ENCODE measurements at regions of chr11 and their contacts with region 1.

Region 1: GRCh38 chr11:74929431-74930363 is 19.2 kb downstream of the XRRA1 start:
- H3K4me3 ChIP-seq: no peak overlapping the region
- H3K27ac ChIP-seq: no peak overlapping the region
- H3K4me1 ChIP-seq: no peaks in the 10 kb centered on the region
- CTCF ChIP-seq: peak; percentile 42; the same call in 1 of the 2 replicates

Region 2: GRCh38 chr11:74909385-74909784 is 20.3 kb before region 1 on chr11:
- CTCF ChIA-PET with region 1: interaction called, 24 read pairs
- POLR2A ChIA-PET with region 1: no interaction called
- H3K4me3 ChIP-seq: no peak overlapping the region
- H3K27ac ChIP-seq: no peak overlapping the region
- H3K4me1 ChIP-seq: no peaks in the 10 kb centered on the region
- CTCF ChIP-seq: no peak

Region 3: GRCh38 chr11:75004215-75004614 is 74.5 kb after region 1 on chr11:
- CTCF ChIA-PET with region 1: interaction called, 10 read pairs
- POLR2A ChIA-PET with region 1: no interaction called
- H3K4me3 ChIP-seq: no peak overlapping the region
- H3K27ac ChIP-seq: no peak overlapping the region
- H3K4me1 ChIP-seq: no peaks in the 10 kb centered on the region
- CTCF ChIP-seq: no peak

Region 4: DNA sequence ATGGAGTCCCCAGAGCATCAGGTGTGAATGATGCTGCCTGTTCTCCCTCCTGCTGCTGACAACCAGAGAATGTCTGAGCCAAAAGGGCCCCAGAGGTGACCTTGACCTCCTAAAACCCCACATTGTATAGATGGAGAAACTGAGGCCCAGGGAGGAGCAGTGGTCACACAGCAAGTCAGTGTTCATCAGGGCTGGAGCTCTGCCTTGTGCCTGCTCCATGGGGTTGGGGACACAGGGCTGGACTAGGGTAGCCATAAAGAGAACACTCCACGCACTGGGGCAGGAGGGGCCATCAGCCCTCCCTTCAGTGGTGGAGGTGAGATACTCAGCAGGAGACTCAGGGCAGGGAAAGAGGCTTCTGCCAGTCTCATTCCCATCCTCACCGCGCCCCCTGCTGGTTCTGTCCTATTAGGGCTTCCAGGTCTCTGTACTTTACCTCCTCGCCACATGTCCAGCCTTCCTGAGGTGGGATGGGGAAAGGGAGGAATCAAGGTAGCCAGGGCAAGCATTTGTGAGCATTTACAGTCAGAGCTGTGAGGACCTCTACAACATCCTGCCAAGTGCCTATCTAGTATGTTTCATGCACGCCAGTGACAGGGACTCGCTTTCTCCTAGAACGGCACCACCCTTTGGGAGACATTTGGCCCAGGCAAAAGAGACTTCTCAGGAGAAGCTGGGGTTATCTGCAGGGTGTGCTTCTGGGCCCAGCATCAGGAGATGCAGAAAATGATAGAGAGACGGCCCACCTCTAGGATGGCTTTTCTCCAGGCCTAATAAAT is 102.3 kb after region 1 on chr11:
- CTCF ChIA-PET with region 1: interaction called, 30 read pairs
- POLR2A ChIA-PET with region 1: no interaction called
- H3K4me3 ChIP-seq: no peak overlapping the region
- H3K27ac ChIP-seq: no peak overlapping the region
- H3K4me1 ChIP-seq: no peaks in the 10 kb centered on the region
- CTCF ChIP-seq: peak; percentile 69

Region 5: GRCh38 chr11:75241036-75241905 is 311.6 kb after region 1 on chr11:
- CTCF ChIA-PET with region 1: interaction called, 23 read pairs
- POLR2A ChIA-PET with region 1: no interaction called
- H3K4me3 ChIP-seq: peak overlapping the region; percentile 49
- H3K27ac ChIP-seq: no peak overlapping the region; the same call in 1 of the 2 replicates
- H3K4me1 ChIP-seq: no peaks in the 10 kb centered on the region
- CTCF ChIP-seq: no peak

Measured in HEK293 (cell line).